ENCODE measurements at regions of chr2 and their contacts with region 1.

Region 1: DNA sequence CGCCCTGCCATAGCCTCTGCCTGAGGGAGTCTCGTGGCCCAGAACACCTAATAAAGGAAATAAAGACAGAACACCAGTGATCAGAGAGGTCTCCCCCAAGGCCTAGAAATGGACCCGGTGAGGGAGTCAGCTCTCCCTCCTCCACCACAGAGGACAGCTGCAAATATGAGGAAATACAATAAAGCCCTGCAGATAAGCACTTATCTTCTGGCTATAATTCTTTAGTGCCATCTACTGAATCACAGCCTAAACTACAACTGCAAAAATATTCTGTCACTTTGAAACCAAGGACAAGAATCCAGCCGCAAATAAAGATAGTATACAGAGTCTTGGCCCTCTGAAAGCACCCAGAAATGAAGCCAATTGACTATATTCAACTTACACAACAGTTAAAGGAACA is 42.4 kb upstream of the TACR1 start:
- DNase-seq: peak; percentile 4
- ATAC-seq: peak; percentile 67
- H3K4me3 ChIP-seq: no peak overlapping the region
- H3K27ac ChIP-seq: no peak overlapping the region
- H3K4me1 ChIP-seq: no peaks in the 10 kb centered on the region
- H3K27me3 ChIP-seq: no peaks in the 10 kb centered on the region
- CTCF ChIP-seq: peak; percentile 54 to 56 (median 55); a peak in 5 of 6 replicates
- POLR2A ChIP-seq: no peak
- RAD21 ChIP-seq: peak; percentile 72

Region 2: DNA sequence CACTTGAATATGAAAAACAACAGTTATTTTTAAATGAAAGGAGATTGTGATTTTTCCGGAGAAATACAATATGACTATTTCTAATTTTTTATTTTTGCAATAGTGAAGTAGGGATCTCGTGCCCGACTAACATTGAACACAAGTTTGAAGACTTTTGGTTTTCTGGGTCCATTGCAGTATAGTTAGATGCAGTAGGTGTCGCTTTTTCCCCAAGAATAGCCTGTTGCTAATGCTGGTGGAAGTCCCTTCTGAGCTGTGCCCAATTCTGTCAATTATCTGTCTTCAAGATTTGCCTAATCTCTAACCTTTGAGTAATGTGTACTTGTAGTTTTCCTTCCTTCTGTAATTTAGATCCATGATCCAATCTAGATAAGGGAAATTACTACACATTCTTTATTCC is 551.1 kb before region 1 on chr2:
- CTCF ChIA-PET with region 1: no interaction called
- POLR2A ChIA-PET with region 1: no interaction called
- RAD21 ChIA-PET with region 1: no interaction called
- intact Hi-C with region 1: loop called (anchors 1 kb)
- DNase-seq: peak; percentile 49
- ATAC-seq: peak; percentile 87
- H3K4me3 ChIP-seq: no peak overlapping the region
- H3K27ac ChIP-seq: no peak overlapping the region
- H3K4me1 ChIP-seq: no peaks in the 10 kb centered on the region
- H3K27me3 ChIP-seq: no peaks in the 10 kb centered on the region
- CTCF ChIP-seq: peak; percentile 71 to 87 (median 76); a peak in 5 of 6 replicates
- POLR2A ChIP-seq: no peak
- RAD21 ChIP-seq: peak; percentile 94

Region 3: GRCh38 chr2:74919827-74920226 is 321.9 kb before region 1 on chr2:
- CTCF ChIA-PET with region 1: interaction called, 3 read pairs
- POLR2A ChIA-PET with region 1: no interaction called
- RAD21 ChIA-PET with region 1: interaction called in 1 of 2 experiments, 4 read pairs
- intact Hi-C with region 1: loop called (anchors 1 kb)
- DNase-seq: peak; percentile 38
- ATAC-seq: peak; percentile 85
- H3K4me3 ChIP-seq: peak overlapping the region in 1 of 2 experiments; percentile 24; a peak in 2 of 4 replicates
- H3K27ac ChIP-seq: no peak overlapping the region
- H3K4me1 ChIP-seq: peaks cover 0 to 4% of the 10 kb centered on the region in 2 experiments; a peak in 1 of 4 replicates
- H3K27me3 ChIP-seq: no peaks in the 10 kb centered on the region
- CTCF ChIP-seq: peak; percentile 67 to 73 (median 72)
- POLR2A ChIP-seq: no peak
- RAD21 ChIP-seq: peak; percentile 88

Region 4: DNA sequence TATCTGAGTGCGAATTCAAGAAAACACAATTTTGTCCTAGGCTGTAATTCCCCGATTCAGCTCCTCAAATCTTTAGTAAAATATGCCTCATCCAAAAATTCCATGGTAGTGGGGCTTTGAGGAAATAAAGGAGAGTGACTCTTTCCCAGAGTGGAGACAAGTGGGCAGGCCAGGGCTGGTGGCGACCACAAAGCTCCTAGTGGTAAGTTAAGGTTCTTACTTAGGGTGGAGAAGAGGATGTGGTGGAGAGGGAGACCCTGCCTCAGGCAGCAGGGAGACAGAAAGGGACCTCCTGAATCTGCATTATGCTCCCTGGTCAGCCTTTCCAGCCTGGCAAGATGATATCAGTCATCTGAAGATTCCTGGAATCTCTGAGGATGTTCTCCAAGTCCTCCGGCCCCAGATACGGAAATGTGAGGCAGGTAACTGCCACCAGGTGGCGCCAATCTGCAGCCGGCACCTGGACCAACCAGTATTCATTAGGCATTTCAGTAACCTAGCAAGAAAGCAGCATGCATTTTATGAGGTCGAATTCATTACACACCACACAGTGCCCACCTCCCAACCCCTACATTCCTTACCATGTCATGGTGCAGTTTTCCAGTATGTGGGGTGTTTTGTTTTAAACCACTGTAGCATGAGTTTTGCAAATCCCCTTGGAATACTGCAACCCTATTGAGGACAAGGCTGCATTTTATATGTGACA is 176.9 kb before region 1 on chr2:
- CTCF ChIA-PET with region 1: interaction called, 16 read pairs
- POLR2A ChIA-PET with region 1: no interaction called
- RAD21 ChIA-PET with region 1: interaction called in 1 of 2 experiments, 3 read pairs
- intact Hi-C with region 1: loop called (anchors 1 kb)
- DNase-seq: peak; percentile 31
- ATAC-seq: peak; percentile 96
- H3K4me3 ChIP-seq: no peak overlapping the region
- H3K27ac ChIP-seq: no peak overlapping the region
- H3K4me1 ChIP-seq: no peaks in the 10 kb centered on the region
- H3K27me3 ChIP-seq: peaks cover 5% of the 10 kb centered on the region; the same call in 1 of the 2 replicates
- CTCF ChIP-seq: peak; percentile 64 to 99 (median 93); a peak in 5 of 6 replicates
- POLR2A ChIP-seq: no peak
- RAD21 ChIP-seq: peak; percentile 61

Region 5: GRCh38 chr2:75098856-75099255 is 142.8 kb before region 1 on chr2:
- CTCF ChIA-PET with region 1: interaction called, 6 read pairs
- POLR2A ChIA-PET with region 1: no interaction called
- RAD21 ChIA-PET with region 1: no interaction called
- intact Hi-C with region 1: loop called (anchors 5 kb)
- DNase-seq: no peak
- ATAC-seq: peak; percentile 72
- H3K4me3 ChIP-seq: no peak overlapping the region
- H3K27ac ChIP-seq: no peak overlapping the region
- H3K4me1 ChIP-seq: peaks cover 2 to 16% of the 10 kb centered on the region in 2 experiments; a peak in 2 of 4 replicates
- H3K27me3 ChIP-seq: peaks cover 37% of the 10 kb centered on the region
- CTCF ChIP-seq: peak; percentile 16 to 56 (median 52); a peak in 4 of 6 replicates
- POLR2A ChIP-seq: no peak
- RAD21 ChIP-seq: peak; percentile 29; the same call in 1 of the 2 replicates

Region 6: DNA sequence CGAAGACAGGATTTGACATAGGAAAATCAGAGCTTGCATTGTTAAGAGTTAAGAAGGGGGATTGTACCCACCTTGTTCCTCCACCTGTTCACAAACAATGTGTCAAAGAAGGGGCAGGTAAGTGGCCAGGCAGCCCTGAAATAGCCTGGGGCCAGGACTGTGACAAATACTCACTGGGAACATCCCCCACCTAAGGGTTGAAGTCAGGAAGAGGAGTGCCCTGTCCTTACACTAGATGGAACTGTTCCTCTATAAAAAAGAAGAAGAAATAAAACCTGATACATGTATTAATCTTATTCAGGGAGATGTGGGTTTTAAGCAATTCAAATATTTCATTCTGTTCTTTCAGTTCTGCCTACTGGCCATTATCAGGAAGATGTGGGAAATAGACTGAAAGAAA is 84.3 kb before region 1 on chr2:
- CTCF ChIA-PET with region 1: interaction called, 10 read pairs
- POLR2A ChIA-PET with region 1: no interaction called
- RAD21 ChIA-PET with region 1: no interaction called
- intact Hi-C with region 1: no loop called
- DNase-seq: no peak
- ATAC-seq: no peak
- H3K4me3 ChIP-seq: no peak overlapping the region
- H3K27ac ChIP-seq: no peak overlapping the region
- H3K4me1 ChIP-seq: no peaks in the 10 kb centered on the region
- H3K27me3 ChIP-seq: peaks cover 14% of the 10 kb centered on the region
- CTCF ChIP-seq: 0 out of 6 replicates have a peak, but pooled peaks of 1 of the 3 experiments have one; percentile 17
- POLR2A ChIP-seq: no peak
- RAD21 ChIP-seq: peak; percentile 20; the same call in 1 of the 2 replicates